ENCODE measurements at regions of chr17 and their contacts with region 1.

Region 1: GRCh38 chr17:59914274-59914854 is 21.4 kb downstream of the RPS6KB1 start:
- DNase-seq: peak; percentile 75
- H3K4me3 ChIP-seq: no peak overlapping the region
- H3K27ac ChIP-seq: no peak overlapping the region
- H3K4me1 ChIP-seq: no peaks in the 10 kb centered on the region
- H3K27me3 ChIP-seq: no peaks in the 10 kb centered on the region
- CTCF ChIP-seq: peak; percentile 84
- EP300 ChIP-seq: no peak
- RAD21 ChIP-seq: peak; percentile 72

Region 2: DNA sequence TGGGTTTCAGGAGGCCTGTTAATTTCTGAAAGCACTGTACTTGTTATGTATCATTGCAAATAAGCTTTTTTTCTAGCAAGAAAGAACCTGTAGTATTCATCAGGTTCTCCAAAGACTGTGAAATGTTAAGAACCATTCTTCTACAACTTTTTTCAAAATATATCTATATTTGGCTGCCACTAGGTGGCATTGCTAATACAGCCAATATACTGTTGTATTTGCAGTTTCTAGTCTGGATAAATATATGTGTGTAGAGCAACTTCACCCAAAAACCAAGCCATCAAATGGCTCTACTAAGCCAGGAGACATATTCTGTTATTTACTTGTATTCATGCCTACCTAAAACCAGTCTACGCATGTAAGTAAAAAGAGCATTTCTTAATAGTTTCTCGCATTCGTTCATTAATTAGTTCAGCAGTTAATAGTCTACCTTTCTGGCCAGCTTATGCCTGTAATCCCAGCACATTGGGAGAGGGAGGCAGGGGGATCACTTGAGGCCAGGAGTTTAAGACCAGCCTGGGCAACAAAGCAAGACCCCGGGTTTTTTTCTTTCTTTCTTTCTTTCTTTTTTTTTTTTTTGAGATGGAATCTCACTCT is 167.4 kb before region 1 on chr17:
- CTCF ChIA-PET with region 1: interaction called, 26 read pairs
- POLR2A ChIA-PET with region 1: no interaction called
- DNase-seq: peak; percentile 44
- H3K4me3 ChIP-seq: no peak overlapping the region; a peak in 1 of 4 replicates
- H3K27ac ChIP-seq: peak overlapping the region; percentile 4 to 54; a peak in 3 of 4 replicates
- H3K4me1 ChIP-seq: peaks cover 0 to 3% of the 10 kb centered on the region in 2 experiments; a peak in 1 of 4 replicates
- H3K27me3 ChIP-seq: no peaks in the 10 kb centered on the region
- CTCF ChIP-seq: peak; percentile 95
- EP300 ChIP-seq: no peak
- RAD21 ChIP-seq: peak; percentile 76

Region 3: GRCh38 chr17:59899103-59899502 is 15.3 kb before region 1 on chr17:
- CTCF ChIA-PET with region 1: interaction called, 43 read pairs
- POLR2A ChIA-PET with region 1: interaction called, 4 read pairs
- DNase-seq: no peak
- H3K4me3 ChIP-seq: no peak overlapping the region
- H3K27ac ChIP-seq: no peak overlapping the region
- H3K4me1 ChIP-seq: peaks cover 0 to 16% of the 10 kb centered on the region in 2 experiments; a peak in 2 of 4 replicates
- H3K27me3 ChIP-seq: no peaks in the 10 kb centered on the region
- CTCF ChIP-seq: no peak
- EP300 ChIP-seq: no peak
- RAD21 ChIP-seq: no peak

Region 4: GRCh38 chr17:59950049-59950448 is 35.7 kb after region 1 on chr17:
- CTCF ChIA-PET with region 1: interaction called, 10 read pairs
- POLR2A ChIA-PET with region 1: no interaction called
- DNase-seq: no peak
- H3K4me3 ChIP-seq: no peak overlapping the region
- H3K27ac ChIP-seq: no peak overlapping the region
- H3K4me1 ChIP-seq: no peaks in the 10 kb centered on the region
- H3K27me3 ChIP-seq: no peaks in the 10 kb centered on the region
- CTCF ChIP-seq: no peak
- EP300 ChIP-seq: no peak
- RAD21 ChIP-seq: no peak

Region 5: DNA sequence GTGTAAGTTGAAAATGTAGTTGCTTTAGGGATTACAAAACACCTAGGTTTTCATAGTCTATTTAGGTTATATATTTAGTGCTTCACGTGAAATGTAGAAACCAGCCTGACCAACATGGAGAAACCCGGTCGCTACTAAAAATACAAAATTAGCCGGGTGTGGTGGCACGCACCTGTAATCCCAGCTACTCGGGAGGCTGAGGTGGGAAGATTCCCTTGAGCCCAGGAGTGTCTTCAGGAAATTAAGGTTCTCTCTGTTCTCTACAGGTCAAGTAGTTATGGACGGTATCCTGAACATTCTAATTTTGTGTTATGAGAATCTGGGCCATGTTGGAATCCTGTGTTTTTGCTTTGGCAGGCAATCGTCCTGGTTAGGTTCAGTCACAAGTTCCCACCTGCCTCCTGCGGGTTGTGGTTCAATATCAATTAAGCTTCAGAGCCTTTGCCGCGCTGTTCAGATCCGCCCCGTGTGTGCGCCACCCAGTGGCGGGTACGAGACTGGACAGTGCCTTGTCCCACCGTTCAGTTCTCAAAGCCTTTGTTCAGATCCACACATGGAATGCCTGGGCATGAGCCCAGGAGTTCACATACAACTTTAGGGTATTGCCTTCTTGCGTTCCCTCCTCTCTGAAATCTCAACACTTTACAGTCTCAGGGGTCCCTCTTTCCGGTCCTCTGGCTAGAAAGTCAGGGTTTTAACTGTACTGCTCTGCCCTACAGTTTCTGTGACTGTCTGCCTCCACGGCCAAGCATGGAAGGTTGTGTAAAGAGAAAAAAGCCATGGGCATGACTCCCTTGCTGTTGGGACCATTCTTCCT is 122.6 kb after region 1 on chr17:
- CTCF ChIA-PET with region 1: interaction called, 129 read pairs
- POLR2A ChIA-PET with region 1: no interaction called
- DNase-seq: peak; percentile 84
- H3K4me3 ChIP-seq: peak overlapping the region in 1 of 2 experiments; percentile 36; a peak in 1 of 4 replicates
- H3K27ac ChIP-seq: no peak overlapping the region
- H3K4me1 ChIP-seq: peaks cover 0 to 14% of the 10 kb centered on the region in 2 experiments; a peak in 1 of 4 replicates
- H3K27me3 ChIP-seq: no peaks in the 10 kb centered on the region
- CTCF ChIP-seq: peak; percentile 100
- EP300 ChIP-seq: no peak
- RAD21 ChIP-seq: peak; percentile 60

Measured in SK-N-SH (cell line).